PC-9 (cell line): ENCODE measurements at regions of chr1 and their contacts with region 1.

Region 1: GRCh38 chr1:153749408-153750005 is 21.7 kb downstream of the INTS3 start:
- DNase-seq: peak; percentile 66 to 73
- H3K4me3 ChIP-seq: no peak overlapping the region
- H3K27ac ChIP-seq: no peak overlapping the region
- H3K4me1 ChIP-seq: no peaks in the 10 kb centered on the region
- H3K27me3 ChIP-seq: no peaks in the 10 kb centered on the region
- CTCF ChIP-seq: peak; percentile 94

Region 2: DNA sequence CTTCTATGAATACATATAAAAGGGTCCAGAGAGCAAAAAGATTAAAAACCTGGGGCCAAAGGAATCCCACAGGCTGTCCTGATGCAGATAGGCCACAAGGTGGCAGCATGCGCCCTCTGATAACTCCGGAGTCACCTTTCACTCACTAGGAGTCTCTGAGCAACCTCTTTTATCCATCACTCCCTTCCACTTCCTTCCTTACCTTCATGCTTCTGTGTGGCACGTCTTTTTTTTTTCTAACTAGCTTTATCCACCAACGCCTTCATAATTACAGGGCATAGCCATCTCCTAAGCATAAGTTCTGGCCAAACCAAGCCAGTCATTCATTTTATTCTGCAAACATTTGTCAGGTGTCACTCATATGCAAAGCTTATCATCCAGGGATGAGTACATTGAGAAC is 397.0 kb before region 1 on chr1:
- CTCF ChIA-PET with region 1: no interaction called
- POLR2A ChIA-PET with region 1: no interaction called
- intact Hi-C with region 1: loop called (anchors 1 kb)
- DNase-seq: peak; percentile 57 to 61
- H3K4me3 ChIP-seq: no peak overlapping the region
- H3K27ac ChIP-seq: no peak overlapping the region
- H3K4me1 ChIP-seq: peaks cover 27% of the 10 kb centered on the region
- H3K27me3 ChIP-seq: peaks cover 8% of the 10 kb centered on the region; the same call in 1 of the 2 replicates
- CTCF ChIP-seq: peak; percentile 93

Region 3: DNA sequence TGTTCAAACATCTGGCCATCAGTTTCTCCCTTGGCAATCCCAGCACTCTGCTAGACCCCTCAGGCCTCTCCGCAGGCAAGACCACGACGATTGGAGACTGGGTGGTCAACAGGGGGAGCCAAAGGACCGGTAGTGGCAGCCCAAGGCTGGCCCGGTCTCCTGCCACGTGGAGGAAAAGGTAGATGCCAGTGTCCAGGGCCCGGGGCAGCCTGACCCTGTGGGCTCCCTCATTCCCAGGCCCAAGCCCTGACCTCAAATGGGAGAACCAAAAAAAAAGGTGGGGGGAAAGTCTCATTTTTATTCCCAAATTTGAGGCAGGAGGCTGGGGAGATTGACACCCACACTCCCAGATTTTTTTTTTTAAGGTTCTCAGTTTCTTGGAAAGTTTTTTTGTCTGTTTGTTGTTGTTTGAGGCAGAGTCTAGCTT is 238.5 kb before region 1 on chr1:
- CTCF ChIA-PET with region 1: interaction called, 3 read pairs
- POLR2A ChIA-PET with region 1: no interaction called
- intact Hi-C with region 1: loop called (anchors 1 kb)
- DNase-seq: peak; percentile 52 to 82
- H3K4me3 ChIP-seq: no peak overlapping the region
- H3K27ac ChIP-seq: no peak overlapping the region
- H3K4me1 ChIP-seq: peaks cover 51% of the 10 kb centered on the region
- H3K27me3 ChIP-seq: no peaks in the 10 kb centered on the region
- CTCF ChIP-seq: peak; percentile 96

Region 4: GRCh38 chr1:153649863-153650235 is 99.7 kb before region 1 on chr1:
- CTCF ChIA-PET with region 1: no interaction called
- POLR2A ChIA-PET with region 1: no interaction called
- intact Hi-C with region 1: no loop called
- DNase-seq: no peak
- H3K4me3 ChIP-seq: no peak overlapping the region
- H3K27ac ChIP-seq: no peak overlapping the region
- H3K4me1 ChIP-seq: peaks cover 11% of the 10 kb centered on the region
- H3K27me3 ChIP-seq: no peaks in the 10 kb centered on the region
- CTCF ChIP-seq: no peak

Region 5: GRCh38 chr1:153677718-153678505 is 71.6 kb before region 1 on chr1:
- CTCF ChIA-PET with region 1: no interaction called
- POLR2A ChIA-PET with region 1: no interaction called
- intact Hi-C with region 1: loop called (anchors 1 kb)
- DNase-seq: peak in 1 of 2 experiments; percentile 38
- H3K4me3 ChIP-seq: peak overlapping the region; percentile 39; the same call in 1 of the 2 replicates
- H3K27ac ChIP-seq: no peak overlapping the region
- H3K4me1 ChIP-seq: no peaks in the 10 kb centered on the region
- H3K27me3 ChIP-seq: peaks cover 9% of the 10 kb centered on the region; the same call in 1 of the 2 replicates
- CTCF ChIP-seq: peak; percentile 94

Region 6: GRCh38 chr1:153688276-153688675 is 61.2 kb before region 1 on chr1:
- CTCF ChIA-PET with region 1: no interaction called
- POLR2A ChIA-PET with region 1: interaction called, 19 read pairs
- intact Hi-C with region 1: no loop called
- DNase-seq: no peak
- H3K4me3 ChIP-seq: no peak overlapping the region
- H3K27ac ChIP-seq: no peak overlapping the region
- H3K4me1 ChIP-seq: peaks cover 6% of the 10 kb centered on the region
- H3K27me3 ChIP-seq: no peaks in the 10 kb centered on the region
- CTCF ChIP-seq: no peak

Region 7: GRCh38 chr1:153929981-153930948 is 180.8 kb after region 1 on chr1:
- CTCF ChIA-PET with region 1: no interaction called
- POLR2A ChIA-PET with region 1: interaction called, 14 read pairs
- intact Hi-C with region 1: no loop called
- DNase-seq: no peak
- H3K4me3 ChIP-seq: no peak overlapping the region
- H3K27ac ChIP-seq: no peak overlapping the region
- H3K4me1 ChIP-seq: no peaks in the 10 kb centered on the region
- H3K27me3 ChIP-seq: no peaks in the 10 kb centered on the region
- CTCF ChIP-seq: no peak

Region 8: GRCh38 chr1:154097873-154098272 is 348.4 kb after region 1 on chr1:
- CTCF ChIA-PET with region 1: no interaction called
- POLR2A ChIA-PET with region 1: no interaction called
- intact Hi-C with region 1: no loop called
- DNase-seq: no peak
- H3K4me3 ChIP-seq: no peak overlapping the region
- H3K27ac ChIP-seq: no peak overlapping the region
- H3K4me1 ChIP-seq: no peaks in the 10 kb centered on the region
- H3K27me3 ChIP-seq: no peaks in the 10 kb centered on the region
- CTCF ChIP-seq: no peak